Posterior cingulate gyrus (tissue), 11 donors: ENCODE measurements at regions of chr6 and their contacts with region 1.

Region 1: DNA sequence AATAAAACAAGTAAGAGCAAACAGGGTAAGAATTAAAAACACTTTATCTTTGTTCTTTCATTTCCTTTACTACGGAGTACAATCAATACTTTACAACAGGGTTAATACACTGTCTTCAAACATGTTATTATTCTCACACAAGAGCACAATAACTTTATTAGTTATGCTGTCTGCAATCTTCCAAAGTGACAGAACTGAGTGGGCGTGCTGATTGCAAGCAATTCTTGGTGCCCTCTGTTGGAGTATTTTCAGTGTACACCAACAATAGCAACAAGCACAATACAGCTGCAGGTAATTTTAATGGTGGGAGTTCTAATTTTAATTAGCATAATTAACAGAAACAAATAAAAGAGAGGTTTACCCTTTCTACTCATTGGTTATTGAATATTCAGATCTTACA is 33.9 kb upstream of the PTPRK start:
- DNase-seq: peak in 1 of 10 donors; percentile 17

Region 2: DNA sequence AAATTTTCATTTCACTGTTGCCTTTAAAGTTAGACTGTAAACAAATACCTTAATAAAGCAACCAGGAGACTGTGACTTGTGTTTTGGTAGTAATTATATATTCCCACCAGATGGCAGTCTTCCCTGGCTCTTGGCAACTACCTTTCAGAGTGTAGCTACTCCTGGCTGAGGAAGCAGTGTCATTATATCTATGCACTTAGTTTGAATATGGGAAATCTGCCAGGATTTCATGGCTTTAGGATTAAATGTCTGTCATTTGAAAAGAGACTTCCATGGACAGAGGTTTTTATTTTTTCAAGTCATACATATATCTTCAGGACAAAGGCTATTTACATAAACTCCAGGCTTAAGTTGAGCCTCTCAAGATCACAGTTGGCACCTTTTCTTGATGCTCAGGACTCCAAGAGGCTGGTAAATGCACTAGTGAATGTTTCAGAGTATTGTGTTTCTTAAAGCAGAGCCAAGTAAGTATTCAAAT is 817.3 kb before region 1 on chr6:
- intact Hi-C with region 1: loop called (anchors 10 kb)
- DNase-seq: peak in 2 of 10 donors; percentile 6 to 24

Region 3: GRCh38 chr6:128259730-128260685 is 294.3 kb before region 1 on chr6:
- intact Hi-C with region 1: no loop called
- DNase-seq: no peak

Region 4: DNA sequence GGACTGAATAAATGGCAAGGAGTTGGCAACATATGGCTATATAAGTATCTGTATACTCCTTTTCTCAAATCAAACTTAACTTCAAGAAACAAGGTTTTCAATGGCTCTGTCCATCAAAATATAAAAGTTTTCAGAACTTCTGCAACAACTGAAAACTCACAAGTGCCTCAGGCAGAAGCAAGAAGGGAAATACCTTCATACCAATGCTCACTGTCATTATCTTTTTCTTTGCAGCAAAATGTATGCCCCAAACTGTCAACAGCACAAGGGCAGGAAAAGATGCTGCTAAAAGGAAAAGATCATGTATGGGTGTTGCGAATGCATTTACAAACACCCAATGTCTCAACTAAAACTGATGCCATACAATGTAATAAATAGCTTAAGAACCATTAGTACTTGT is 79.8 kb before region 1 on chr6:
- intact Hi-C with region 1: no loop called
- DNase-seq: no peak

Region 5: DNA sequence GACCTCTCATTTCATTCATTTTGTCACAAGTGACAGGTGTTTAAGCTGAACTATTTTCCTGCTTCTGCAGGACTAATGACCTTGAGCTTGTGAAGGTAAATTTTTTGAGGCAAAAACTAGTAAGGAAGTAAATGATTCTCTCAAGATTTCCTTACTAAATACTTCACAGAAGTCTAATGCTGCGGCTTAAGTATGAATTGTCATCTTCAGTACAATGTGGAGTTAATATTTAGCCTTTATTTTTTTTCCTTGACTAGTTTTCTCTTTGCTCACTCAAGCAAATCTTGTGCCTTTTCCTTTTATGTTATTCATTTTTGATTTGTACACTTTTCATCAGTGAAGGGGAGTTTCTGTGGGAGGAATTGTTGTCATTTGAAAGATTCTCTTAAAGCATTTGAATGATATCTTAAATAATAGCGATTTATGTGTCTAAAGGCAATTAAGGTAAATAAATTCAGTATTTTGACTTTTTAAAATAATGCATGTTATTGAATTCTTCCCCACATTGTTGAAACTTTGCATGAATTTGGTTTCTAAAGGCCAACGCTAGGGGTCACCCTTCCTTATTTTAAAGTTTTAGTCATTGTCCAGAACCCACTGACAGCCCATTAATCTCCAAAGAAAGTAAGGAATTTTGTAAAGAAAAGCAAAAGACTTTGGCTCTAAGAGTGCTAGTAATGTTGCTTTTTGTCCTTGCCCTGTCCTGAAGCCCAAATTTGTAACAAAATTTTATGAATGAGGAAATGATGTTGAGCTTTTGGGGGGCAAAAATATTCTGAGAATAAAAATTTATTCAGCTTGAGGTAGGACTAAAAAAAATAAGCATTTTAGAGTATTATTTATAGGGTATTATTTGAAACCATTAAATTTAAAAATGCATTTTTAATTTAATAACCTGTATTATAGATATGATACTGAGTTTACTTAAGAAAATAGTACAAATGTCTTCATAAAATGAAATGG is 171.2 kb after region 1 on chr6:
- intact Hi-C with region 1: loop called (anchors 10 kb)
- DNase-seq: peak in 1 of 10 donors; percentile 34